Psoas muscle (tissue), 8 donors: ENCODE measurements at regions of chr22 and their contacts with region 1.

Region 1: GRCh38 chr22:35257321-35258190 is at the start of gene HMGXB4:
- DNase-seq: peak; percentile 92 to 94
- ATAC-seq: peak; percentile 95 to 98 (median 96)
- H3K4me3 ChIP-seq: peak within 1 kb of the TSS; percentile 94
- H3K27ac ChIP-seq: peak within 1 kb of the TSS; percentile 97
- H3K4me1 ChIP-seq: peaks cover 15% of the 10 kb centered on the region
- H3K27me3 ChIP-seq: no peaks in the 10 kb centered on the region
- CTCF ChIP-seq: peak; percentile 17
- total RNA-seq, gene HMGXB4: 7.1 to 12.4 (median 11.3) TPM

Region 2: GRCh38 chr22:34866495-34867131 is 390.9 kb before region 1 on chr22:
- intact Hi-C with region 1: no loop called
- DNase-seq: no peak
- ATAC-seq: peak in 1 of 4 donors; percentile 61
- H3K4me3 ChIP-seq: no peak overlapping the region
- H3K27ac ChIP-seq: no peak overlapping the region
- H3K4me1 ChIP-seq: no peaks in the 10 kb centered on the region
- H3K27me3 ChIP-seq: peaks cover 0 to 4% (median 3%) of the 10 kb centered on the region in 3 donors
- CTCF ChIP-seq: no peak

Region 3: DNA sequence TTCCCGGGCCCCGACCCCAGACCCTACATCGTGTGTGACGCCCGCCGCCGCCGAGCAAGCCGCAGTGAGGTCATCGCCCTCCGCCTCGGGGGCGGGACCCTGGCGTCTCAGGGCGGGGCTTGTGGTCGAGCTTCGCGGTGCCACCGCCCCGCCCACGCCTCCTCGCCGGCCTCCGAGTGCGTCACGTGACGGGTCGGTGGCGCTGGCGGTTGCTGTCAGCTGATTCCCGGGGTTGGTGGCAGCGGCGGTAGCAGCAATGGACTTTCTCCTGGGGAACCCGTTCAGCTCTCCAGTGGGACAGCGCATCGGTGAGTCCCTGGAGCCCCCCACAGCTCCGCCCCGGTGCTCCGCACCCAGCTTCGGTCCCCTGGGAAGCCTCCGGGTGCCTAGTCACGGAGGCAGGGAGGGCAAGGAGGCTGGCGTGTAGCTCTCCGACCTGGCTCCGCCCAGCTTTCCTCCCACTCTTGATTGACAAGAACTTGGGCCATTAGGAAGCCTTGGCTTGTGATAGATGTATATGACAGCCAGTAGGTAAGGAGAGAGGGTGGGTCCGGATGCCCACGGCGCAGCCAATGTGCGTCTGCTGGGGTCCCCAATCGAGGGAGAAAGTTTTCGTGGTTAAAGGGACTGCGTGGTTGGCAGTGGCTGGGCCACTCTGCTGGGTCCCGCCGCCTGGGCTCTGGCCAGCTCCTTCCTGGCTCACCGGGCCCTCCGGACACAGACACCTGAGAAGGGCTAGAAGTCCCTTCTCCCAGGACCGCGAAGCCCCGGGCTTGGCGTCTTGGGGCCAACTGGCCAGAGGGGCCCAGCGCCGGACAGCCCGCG is 42.3 kb after region 1 on chr22 and contains the start of gene TOM1:
- intact Hi-C with region 1: loop called in 1 of 2 experiments (anchors 5 kb)
- DNase-seq: peak; percentile 97 to 99
- ATAC-seq: peak; percentile 91 to 94 (median 92)
- H3K4me3 ChIP-seq: peak within 1 kb of the TSS; percentile 75
- H3K27ac ChIP-seq: peak within 1 kb of the TSS; percentile 99
- H3K4me1 ChIP-seq: peaks cover 26% of the 10 kb centered on the region
- H3K27me3 ChIP-seq: no peaks in the 10 kb centered on the region
- CTCF ChIP-seq: no peak
- total RNA-seq, gene TOM1: 91.7 to 187 (median 156) TPM